Activated CD4-positive, alpha-beta T cell treated with anti-CD3 and anti-CD28 coated beads for 36 hours (primary cell): ENCODE measurements at regions of chr2 and their contacts with region 1.

Region 1: GRCh38 chr2:112121682-112122254 is 16.4 kb upstream of the FBLN7 start:
- DNase-seq: peak; percentile 62
- ATAC-seq: no peak
- H3K4me3 Mint-ChIP-seq: no peak overlapping the region
- H3K27ac Mint-ChIP-seq: no peak overlapping the region
- H3K4me1 Mint-ChIP-seq: peaks cover 12% of the 10 kb centered on the region
- H3K27me3 Mint-ChIP-seq: no peaks in the 10 kb centered on the region

Region 2: DNA sequence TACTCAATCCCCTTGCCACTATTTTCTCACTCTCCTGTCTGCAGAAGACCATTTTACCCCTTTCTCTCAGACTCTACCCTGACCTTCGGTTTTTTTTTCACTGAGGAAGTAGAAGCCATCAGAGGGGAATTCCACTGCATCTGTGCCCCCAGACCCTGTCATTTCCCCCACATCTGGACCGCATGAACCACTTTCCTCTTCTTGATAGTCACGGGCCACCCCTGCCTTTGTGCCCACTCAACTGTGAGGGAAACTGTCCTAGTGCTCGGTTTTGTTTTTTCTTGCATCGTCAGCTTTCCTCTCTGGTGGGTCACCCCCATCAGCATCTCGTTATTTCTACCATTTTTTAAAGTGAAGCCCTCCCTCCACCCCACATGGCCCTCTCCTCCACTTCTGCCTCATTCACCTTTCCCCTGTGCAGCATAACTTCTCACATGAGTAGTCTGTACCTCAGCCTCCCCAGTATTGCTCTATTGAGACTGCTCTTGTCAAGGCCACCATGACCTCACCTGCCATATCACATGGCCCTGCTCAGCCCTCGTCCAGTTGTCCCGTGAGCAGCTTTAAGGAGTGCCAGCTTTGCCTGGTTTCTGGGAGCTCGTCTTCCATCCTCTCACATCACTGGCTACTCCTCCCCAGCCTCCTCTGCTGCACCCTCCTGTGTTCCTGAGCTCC is 34.3 kb before region 1 on chr2:
- CTCF ChIA-PET with region 1: interaction called, 10 read pairs
- POLR2A ChIA-PET with region 1: no interaction called
- intact Hi-C with region 1: no loop called
- DNase-seq: no peak
- ATAC-seq: no peak
- H3K4me3 Mint-ChIP-seq: no peak overlapping the region
- H3K27ac Mint-ChIP-seq: no peak overlapping the region
- H3K4me1 Mint-ChIP-seq: peaks cover 8% of the 10 kb centered on the region
- H3K27me3 Mint-ChIP-seq: no peaks in the 10 kb centered on the region

Region 3: DNA sequence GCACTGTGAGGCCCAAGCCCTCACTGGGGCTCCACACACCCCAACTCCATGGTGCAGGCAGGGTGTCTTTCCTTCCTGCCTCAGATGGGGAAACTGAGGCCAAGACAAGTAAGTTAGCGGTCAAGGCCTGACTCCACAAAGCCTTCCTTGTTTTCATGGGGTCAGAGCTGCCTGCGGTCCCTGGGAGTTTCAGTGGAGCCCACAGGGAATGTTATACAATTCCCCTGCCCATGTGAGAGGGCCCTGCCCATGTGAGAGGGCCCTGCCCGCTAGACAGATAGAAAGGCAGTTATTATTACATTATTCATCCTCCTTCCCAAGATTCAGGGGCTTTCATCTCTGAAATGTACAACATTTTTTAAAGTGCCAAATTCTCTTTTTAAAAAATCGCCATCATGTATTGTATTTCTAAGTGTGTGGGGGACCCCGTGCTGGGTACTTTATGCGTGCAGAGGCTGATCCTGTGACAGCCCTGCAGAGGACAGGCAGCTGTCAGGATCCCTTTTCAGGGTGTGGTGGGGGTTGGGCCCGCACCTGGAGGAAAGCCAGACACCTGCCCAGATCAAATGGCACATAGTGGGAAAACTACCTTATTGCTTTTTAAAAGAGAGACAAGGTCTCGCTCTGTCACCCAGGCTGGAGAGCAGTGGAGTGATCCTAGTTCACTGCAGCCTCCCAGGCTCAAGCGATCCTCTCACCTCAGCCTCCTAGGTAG is 39.8 kb after region 1 on chr2:
- CTCF ChIA-PET with region 1: no interaction called
- POLR2A ChIA-PET with region 1: no interaction called
- intact Hi-C with region 1: no loop called
- DNase-seq: no peak
- ATAC-seq: no peak
- H3K4me3 Mint-ChIP-seq: no peak overlapping the region
- H3K27ac Mint-ChIP-seq: no peak overlapping the region
- H3K4me1 Mint-ChIP-seq: peaks cover 17% of the 10 kb centered on the region
- H3K27me3 Mint-ChIP-seq: no peaks in the 10 kb centered on the region

Region 4: DNA sequence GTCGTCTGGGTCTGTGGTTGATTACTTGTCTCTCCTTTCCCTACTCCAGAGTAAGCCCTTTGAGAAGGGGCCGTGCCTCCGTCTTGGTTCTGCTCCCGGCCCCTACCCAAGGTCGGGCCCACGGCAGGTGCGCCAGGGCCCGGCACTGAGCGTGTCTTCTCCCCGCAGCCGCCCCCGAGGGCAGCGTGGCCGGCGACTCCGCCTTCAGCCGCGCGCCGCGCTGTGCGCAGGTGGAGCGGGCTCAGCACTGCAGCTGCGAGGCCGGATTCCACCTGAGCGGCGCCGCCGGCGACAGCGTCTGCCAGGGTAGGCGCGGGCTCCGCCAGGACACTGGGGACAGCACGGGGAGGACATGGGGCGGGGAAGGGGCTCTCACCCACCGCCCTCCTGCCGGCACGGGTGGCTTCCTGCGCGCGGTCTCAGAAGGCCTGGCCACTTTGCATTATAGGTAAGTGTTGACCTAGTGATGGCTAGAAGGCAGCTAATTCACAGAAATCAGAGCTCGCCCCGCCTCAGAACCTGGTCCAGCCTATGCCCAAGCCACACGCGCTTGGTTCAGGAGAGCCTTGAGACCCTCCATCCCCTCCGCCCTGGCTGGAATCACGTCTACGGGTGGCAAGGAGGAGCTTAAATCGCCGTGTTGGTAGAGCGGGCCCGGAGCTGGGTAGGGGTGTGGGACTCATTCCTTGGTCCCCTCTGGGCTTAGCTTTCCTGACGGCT is 60.0 kb after region 1 on chr2:
- CTCF ChIA-PET with region 1: interaction called, 10 read pairs
- POLR2A ChIA-PET with region 1: no interaction called
- intact Hi-C with region 1: no loop called
- DNase-seq: peak; percentile 84
- ATAC-seq: peak; percentile 67
- H3K4me3 Mint-ChIP-seq: peak overlapping the region; percentile 88
- H3K27ac Mint-ChIP-seq: peak overlapping the region; percentile 91
- H3K4me1 Mint-ChIP-seq: peaks cover 69% of the 10 kb centered on the region
- H3K27me3 Mint-ChIP-seq: no peaks in the 10 kb centered on the region

Region 5: GRCh38 chr2:112259509-112260294 is 137.9 kb after region 1 on chr2:
- CTCF ChIA-PET with region 1: interaction called, 29 read pairs
- POLR2A ChIA-PET with region 1: no interaction called
- intact Hi-C with region 1: loop called (anchors 2 to 5 kb)
- DNase-seq: peak; percentile 92
- ATAC-seq: peak; percentile 49
- H3K4me3 Mint-ChIP-seq: peak overlapping the region; percentile 16
- H3K27ac Mint-ChIP-seq: peak overlapping the region; percentile 76
- H3K4me1 Mint-ChIP-seq: peaks cover 22% of the 10 kb centered on the region
- H3K27me3 Mint-ChIP-seq: peaks cover 1% of the 10 kb centered on the region

Region 6: DNA sequence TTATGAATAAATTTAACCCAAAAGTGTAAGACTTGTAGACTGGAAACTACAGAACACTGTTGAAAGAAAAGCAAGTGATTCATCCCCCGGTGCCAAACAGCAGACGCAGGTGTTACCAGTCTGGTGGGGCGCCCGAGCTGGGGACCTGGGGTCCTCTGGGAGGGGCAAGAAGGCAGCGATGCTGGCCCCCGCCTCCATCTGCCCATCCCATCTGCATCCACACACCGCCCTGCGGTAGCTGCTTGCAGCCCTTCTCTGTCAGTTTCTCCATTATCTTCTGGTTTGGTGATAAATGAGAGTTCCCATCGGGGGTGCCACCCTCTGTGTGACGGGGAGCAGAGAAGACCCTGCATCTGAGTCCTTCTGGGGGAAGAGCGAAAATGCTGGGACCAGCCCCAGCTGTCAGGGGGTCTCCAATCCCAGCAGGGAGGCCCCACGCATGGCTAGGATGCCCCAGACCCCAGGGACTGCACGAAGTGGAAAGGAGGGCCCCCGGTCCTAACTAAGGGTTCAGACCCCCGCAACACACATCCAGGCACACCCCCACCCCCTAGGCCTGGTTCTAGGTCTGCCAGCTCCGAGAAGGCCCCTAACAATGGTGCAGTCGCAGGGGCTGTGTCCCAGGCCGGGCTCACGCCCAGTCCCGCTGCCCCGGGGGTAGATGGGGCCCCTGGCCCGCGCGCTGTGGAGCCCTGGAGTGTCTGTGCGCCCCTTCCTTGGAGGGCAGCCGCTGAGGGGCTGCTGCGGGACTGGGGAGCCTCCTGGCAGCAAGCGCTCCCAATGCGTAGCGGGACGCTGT is 312.4 kb after region 1 on chr2:
- CTCF ChIA-PET with region 1: no interaction called
- POLR2A ChIA-PET with region 1: no interaction called
- intact Hi-C with region 1: loop called (anchors 1 to 10 kb)
- DNase-seq: no peak
- ATAC-seq: no peak
- H3K4me3 Mint-ChIP-seq: peak overlapping the region; percentile 65
- H3K27ac Mint-ChIP-seq: no peak overlapping the region
- H3K4me1 Mint-ChIP-seq: peaks cover 10% of the 10 kb centered on the region
- H3K27me3 Mint-ChIP-seq: peaks cover 5% of the 10 kb centered on the region